Dendritic cell treated with granulocyte-macrophage colony-stimulating factor and Interleukin-4, amounts not matched to agents 40 ng/mL and 50 ng/mL, for 4 days (primary cell): ENCODE measurements at regions of chr10 and their contacts with region 1.

Region 1: GRCh38 chr10:69123747-69124562 is at the start of gene VPS26A:
- H3K4me3 Mint-ChIP-seq: peak within 1 kb of the TSS; percentile 93
- H3K27ac Mint-ChIP-seq: peak within 1 kb of the TSS; percentile 99
- H3K4me1 Mint-ChIP-seq: peaks cover 15% of the 10 kb centered on the region
- H3K27me3 Mint-ChIP-seq: no peaks in the 10 kb centered on the region

Region 2: GRCh38 chr10:68955832-68956532 is 168.0 kb before region 1 on chr10 and contains the start of gene DDX21:
- intact Hi-C with region 1: loop called (anchors 2 kb)
- H3K4me3 Mint-ChIP-seq: peak within 1 kb of the TSS; percentile 90
- H3K27ac Mint-ChIP-seq: peak within 1 kb of the TSS; percentile 93
- H3K4me1 Mint-ChIP-seq: peaks cover 23% of the 10 kb centered on the region
- H3K27me3 Mint-ChIP-seq: no peaks in the 10 kb centered on the region

Region 3: DNA sequence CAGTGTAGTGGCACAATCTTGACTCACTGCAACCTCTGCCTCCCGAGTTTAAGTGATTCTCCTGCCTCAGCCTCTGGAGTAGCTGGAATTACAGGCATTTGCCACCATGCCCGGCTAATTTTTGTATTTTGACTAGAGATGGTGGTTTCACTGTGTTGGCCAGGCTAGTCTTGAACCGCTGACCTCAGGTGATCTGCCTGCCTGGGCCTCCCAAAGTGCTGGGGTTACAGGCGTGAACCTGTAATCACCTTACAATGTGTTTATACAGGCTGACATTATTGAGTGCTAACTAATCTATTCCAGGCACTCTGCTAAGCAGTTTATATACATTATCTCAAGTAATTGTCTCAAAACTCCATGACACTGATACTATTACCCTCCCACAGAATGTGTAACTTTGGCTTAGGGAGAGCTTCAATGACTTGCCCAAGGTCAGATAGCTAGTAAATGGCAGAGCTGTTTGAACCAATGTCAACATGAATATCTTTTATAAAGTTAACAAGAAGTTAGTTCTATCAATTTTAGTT is 98.5 kb before region 1 on chr10:
- intact Hi-C with region 1: no loop called
- H3K4me3 Mint-ChIP-seq: no peak overlapping the region
- H3K27ac Mint-ChIP-seq: no peak overlapping the region
- H3K4me1 Mint-ChIP-seq: peaks cover 9% of the 10 kb centered on the region
- H3K27me3 Mint-ChIP-seq: no peaks in the 10 kb centered on the region

Region 4: GRCh38 chr10:69179743-69180524 is 56.0 kb after region 1 on chr10 and contains the start of gene SUPV3L1:
- intact Hi-C with region 1: loop called (anchors 1 kb)
- H3K4me3 Mint-ChIP-seq: peak within 1 kb of the TSS; percentile 95
- H3K27ac Mint-ChIP-seq: peak within 1 kb of the TSS; percentile 99
- H3K4me1 Mint-ChIP-seq: peaks cover 25% of the 10 kb centered on the region
- H3K27me3 Mint-ChIP-seq: no peaks in the 10 kb centered on the region